ENCODE measurements at regions of chr1 and their contacts with region 1.

Region 1: GRCh38 chr1:6634371-6635052 is 9.8 kb downstream of the THAP3 start:
- DNase-seq: peak in 1 of 2 donors; percentile 36
- H3K4me3 ChIP-seq: no peak overlapping the region
- H3K27ac ChIP-seq: peak overlapping the region in 1 of 2 donors; percentile 13
- H3K4me1 ChIP-seq: peaks cover 0 to 29% (median 6%) of the 10 kb centered on the region in 4 donors
- H3K27me3 ChIP-seq: no peaks in the 10 kb centered on the region
- CTCF ChIP-seq: peak; percentile 34 to 42

Region 2: DNA sequence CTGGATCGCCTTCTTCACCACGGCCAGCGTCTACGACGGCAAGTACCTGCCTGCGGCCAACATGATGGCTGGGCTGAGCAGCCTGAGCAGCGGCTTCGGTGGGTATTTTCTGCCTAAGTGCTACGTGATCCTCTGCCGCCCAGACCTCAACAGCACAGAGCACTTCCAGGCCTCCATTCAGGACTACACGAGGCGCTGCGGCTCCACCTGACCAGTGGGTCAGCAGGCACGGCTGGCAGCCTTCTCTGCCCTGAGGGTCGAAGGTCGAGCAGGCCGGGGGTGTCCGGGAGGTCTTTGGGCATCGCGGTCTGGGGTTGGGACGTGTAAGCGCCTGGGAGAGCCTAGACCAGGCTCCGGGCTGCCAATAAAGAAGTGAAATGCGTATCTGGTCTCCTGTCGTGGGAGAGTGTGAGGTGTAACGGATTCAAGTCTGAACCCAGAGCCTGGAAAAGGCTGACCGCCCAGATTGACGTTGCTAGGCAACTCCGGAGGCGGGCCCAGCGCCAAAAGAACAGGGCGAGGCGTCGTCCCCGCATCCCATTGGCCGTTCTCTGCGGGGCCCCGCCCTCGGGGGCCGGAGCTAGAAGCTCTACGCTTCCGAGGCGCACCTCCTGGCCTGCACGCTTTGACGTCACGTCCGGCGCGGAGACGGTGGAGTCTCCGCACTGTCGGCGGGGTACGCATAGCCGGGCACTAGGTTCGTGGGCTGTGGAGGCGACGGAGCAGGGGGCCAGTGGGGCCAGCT is 55.0 kb before region 1 on chr1 and contains the start of gene ZBTB48:
- intact Hi-C with region 1: loop called (anchors 10 kb)
- DNase-seq: peak; percentile 99 to 100
- H3K4me3 ChIP-seq: peak within 1 kb of the TSS; percentile 88 to 91
- H3K27ac ChIP-seq: peak within 1 kb of the TSS; percentile 95 to 96
- H3K4me1 ChIP-seq: peaks cover 8 to 46% (median 32%) of the 10 kb centered on the region in 4 donors
- H3K27me3 ChIP-seq: no peaks in the 10 kb centered on the region
- CTCF ChIP-seq: peak in 1 of 2 experiments; percentile 4

Region 3: DNA sequence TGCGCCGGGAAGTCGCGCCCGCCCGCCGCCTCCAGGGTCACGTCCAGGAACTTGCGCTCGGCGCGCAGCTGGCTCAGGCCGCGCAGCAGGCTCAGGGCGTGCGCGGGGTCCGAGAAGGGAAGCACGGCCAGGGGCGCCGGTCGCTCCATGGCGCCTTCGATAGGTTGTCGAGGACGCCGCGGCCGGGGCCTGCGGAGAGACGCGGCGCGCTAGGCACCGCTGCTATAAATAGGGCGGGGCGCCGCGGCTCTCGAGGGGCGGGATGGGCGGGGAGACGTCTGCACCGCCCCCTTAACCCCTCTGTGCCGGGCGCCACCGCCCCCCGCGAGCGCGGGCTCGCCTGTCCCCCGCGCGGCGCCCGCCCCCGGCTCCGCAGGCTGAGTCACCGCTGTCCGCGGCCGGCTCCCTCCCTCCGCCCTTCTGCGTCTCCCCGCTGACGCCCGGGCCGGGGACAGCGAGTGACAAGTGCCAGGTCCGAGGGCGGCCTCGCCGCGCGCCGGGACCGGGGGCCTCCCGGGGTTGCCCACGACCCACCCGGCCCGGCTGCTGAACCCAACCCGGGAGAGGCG is 31.8 kb before region 1 on chr1 and contains the start of gene KLHL21:
- intact Hi-C with region 1: loop called (anchors 5 kb)
- DNase-seq: peak; percentile 86 to 97
- H3K4me3 ChIP-seq: peak within 1 kb of the TSS; percentile 95 to 98
- H3K27ac ChIP-seq: peak within 1 kb of the TSS; percentile 98 to 99
- H3K4me1 ChIP-seq: peaks cover 0 to 71% (median 45%) of the 10 kb centered on the region in 4 donors
- H3K27me3 ChIP-seq: no peaks in the 10 kb centered on the region
- CTCF ChIP-seq: no peak